ENCODE measurements at regions of chr9 and their contacts with region 1.

Region 1: DNA sequence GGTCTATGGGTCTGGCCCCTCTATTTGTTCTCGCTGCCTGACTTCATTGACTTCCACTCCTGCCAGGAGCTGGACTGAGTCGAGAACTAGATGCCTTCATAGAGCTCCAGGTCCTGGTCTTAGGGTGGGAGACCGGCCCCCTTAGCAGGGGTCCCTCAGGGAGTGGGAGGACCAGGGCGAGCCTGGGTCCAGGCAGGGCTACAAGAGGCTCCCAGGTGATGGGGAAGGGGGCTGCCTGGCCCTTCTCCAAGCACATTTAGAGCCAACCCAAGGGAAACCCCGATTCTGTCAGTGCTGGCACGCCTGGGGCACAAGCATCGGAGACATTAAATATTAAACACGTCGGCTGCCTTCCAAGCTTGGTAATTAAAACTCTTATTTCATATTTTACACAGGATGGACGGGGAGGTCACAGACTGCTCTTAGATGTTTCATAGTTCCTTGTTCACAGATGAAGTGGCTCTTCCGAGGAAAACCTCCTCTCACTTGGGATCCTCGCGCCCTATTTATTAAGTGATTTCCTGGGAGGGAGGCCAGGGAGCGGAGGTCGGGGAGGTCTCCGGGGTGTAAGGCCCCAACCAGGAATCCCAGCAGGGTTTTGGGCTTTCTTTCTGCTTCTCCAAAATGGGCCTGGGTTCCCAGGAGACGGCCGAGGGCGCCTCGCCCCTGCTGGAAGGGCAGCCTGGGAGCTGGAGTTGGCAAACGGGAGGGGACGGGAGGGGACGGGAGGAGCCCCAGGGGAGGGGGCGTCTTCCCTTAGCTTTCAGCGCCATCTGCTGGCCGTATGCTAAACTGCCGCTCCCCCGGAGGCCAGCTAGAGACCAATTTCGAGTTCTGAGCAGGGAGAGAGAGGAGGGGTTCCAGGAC is 23.4 kb upstream of the ZBTB43 start:
- DNase-seq: no peak
- H3K4me3 ChIP-seq: no peak overlapping the region
- H3K27me3 ChIP-seq: peaks cover 9% of the 10 kb centered on the region; the same call in 1 of the 2 replicates
- CTCF ChIP-seq: peak; percentile 91

Region 2: DNA sequence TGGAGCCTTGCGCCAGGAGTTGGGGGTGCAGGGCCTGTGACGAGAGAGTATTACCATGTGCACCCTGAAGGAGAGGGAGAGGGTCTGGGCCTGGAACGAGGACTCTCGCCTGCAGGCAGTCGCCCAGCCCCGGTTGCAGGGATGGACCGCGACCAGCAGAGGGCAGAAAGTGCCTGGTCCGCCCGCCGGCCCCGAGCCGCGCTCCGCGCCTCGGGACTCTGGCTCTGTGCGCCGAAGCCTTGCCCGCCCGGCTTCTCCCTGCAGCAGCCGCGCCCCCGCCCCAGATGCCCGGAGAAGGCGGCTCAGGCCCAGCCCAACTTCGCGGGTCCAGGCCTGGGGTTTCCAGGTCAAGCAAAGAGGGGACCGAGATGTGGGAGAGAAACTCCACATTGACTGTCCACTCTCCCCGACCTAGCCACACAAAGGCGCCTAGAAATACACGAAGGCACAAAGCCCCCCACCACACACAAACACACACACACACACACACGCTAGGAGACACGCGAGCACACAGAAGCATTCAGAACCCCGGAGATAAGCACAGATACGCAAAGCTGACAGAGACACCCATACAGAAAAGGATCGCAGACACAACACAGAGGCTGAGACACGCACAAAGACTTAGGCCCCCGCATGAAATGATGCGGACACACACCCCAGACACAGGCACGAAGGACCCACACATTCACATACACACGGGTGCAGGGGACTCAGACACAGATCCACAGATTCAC is 169.7 kb before region 1 on chr9:
- CTCF ChIA-PET with region 1: interaction called, 38 read pairs
- POLR2A ChIA-PET with region 1: no interaction called
- DNase-seq: no peak
- H3K4me3 ChIP-seq: no peak overlapping the region
- H3K27me3 ChIP-seq: peaks cover 61% of the 10 kb centered on the region
- CTCF ChIP-seq: peak; percentile 82

Region 3: GRCh38 chr9:126791406-126792151 is 10.2 kb after region 1 on chr9:
- CTCF ChIA-PET with region 1: interaction called, 12 read pairs
- POLR2A ChIA-PET with region 1: no interaction called
- DNase-seq: peak; percentile 25
- H3K4me3 ChIP-seq: no peak overlapping the region
- H3K27me3 ChIP-seq: no peaks in the 10 kb centered on the region; the same call in 1 of the 2 replicates
- CTCF ChIP-seq: no peak